CD4-positive, alpha-beta T cell (primary cell): ENCODE measurements at regions of chr17 and their contacts with region 1.

Region 1: GRCh38 chr17:32319548-32319905 is 22.4 kb downstream of the C17orf75 start:
- DNase-seq: peak; percentile 46 to 83 (median 68)
- ATAC-seq: peak; percentile 85
- H3K4me3 ChIP-seq: peak overlapping the region; percentile 40
- H3K4me3 Mint-ChIP-seq: peak overlapping the region; percentile 67
- H3K27ac ChIP-seq: no peak overlapping the region
- H3K27ac Mint-ChIP-seq: no peak overlapping the region
- H3K4me1 ChIP-seq: peaks cover 21% of the 10 kb centered on the region
- H3K4me1 Mint-ChIP-seq: peaks cover 8% of the 10 kb centered on the region
- H3K27me3 ChIP-seq: no peaks in the 10 kb centered on the region
- H3K27me3 Mint-ChIP-seq: peaks cover 14% of the 10 kb centered on the region
- CTCF ChIP-seq: peak; percentile 90

Region 2: GRCh38 chr17:32142857-32143526 is 176.5 kb before region 1 on chr17:
- CTCF ChIA-PET with region 1: no interaction called
- POLR2A ChIA-PET with region 1: no interaction called
- intact Hi-C with region 1: no loop called
- DNase-seq: peak in 4 of 14 experiments; percentile 5 to 42 (median 26)
- ATAC-seq: no peak
- H3K4me3 ChIP-seq: peak overlapping the region; percentile 88
- H3K4me3 Mint-ChIP-seq: peak overlapping the region; percentile 91
- H3K27ac ChIP-seq: no peak overlapping the region
- H3K27ac Mint-ChIP-seq: peak overlapping the region; percentile 86
- H3K4me1 ChIP-seq: peaks cover 42% of the 10 kb centered on the region
- H3K4me1 Mint-ChIP-seq: peaks cover 37% of the 10 kb centered on the region
- H3K27me3 ChIP-seq: no peaks in the 10 kb centered on the region
- H3K27me3 Mint-ChIP-seq: no peaks in the 10 kb centered on the region
- CTCF ChIP-seq: no peak

Region 3: DNA sequence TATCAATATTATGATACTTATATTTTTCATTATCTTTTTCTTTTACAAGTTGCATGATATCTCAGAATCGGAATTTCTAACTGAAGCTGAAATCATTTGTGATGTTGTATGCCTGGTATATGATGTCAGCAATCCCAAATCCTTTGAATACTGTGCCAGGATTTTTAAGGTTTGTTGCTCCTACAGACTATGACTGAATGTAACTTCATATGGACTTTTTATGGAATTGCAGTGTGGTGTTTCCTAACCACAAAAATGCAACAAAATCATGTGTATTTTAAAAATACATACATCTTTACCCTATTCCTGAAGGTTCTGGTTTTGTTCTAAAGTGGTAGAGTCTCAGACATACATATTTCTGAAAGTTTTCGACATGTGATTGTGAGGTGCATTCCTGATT is 112.7 kb before region 1 on chr17:
- CTCF ChIA-PET with region 1: no interaction called
- POLR2A ChIA-PET with region 1: no interaction called
- intact Hi-C with region 1: loop called in 1 of 2 experiments (anchors 1 kb)
- DNase-seq: no peak
- ATAC-seq: no peak
- H3K4me3 ChIP-seq: no peak overlapping the region
- H3K4me3 Mint-ChIP-seq: no peak overlapping the region
- H3K27ac ChIP-seq: no peak overlapping the region
- H3K27ac Mint-ChIP-seq: no peak overlapping the region
- H3K4me1 ChIP-seq: no peaks in the 10 kb centered on the region
- H3K4me1 Mint-ChIP-seq: no peaks in the 10 kb centered on the region
- H3K27me3 ChIP-seq: no peaks in the 10 kb centered on the region
- H3K27me3 Mint-ChIP-seq: no peaks in the 10 kb centered on the region
- CTCF ChIP-seq: no peak

Region 4: GRCh38 chr17:32253117-32253611 is 66.4 kb before region 1 on chr17:
- CTCF ChIA-PET with region 1: interaction called, 4 read pairs
- POLR2A ChIA-PET with region 1: no interaction called
- intact Hi-C with region 1: loop called (anchors 1 kb)
- DNase-seq: peak; percentile 16 to 78 (median 46)
- ATAC-seq: peak; percentile 99
- H3K4me3 ChIP-seq: no peak overlapping the region
- H3K4me3 Mint-ChIP-seq: no peak overlapping the region
- H3K27ac ChIP-seq: no peak overlapping the region
- H3K27ac Mint-ChIP-seq: no peak overlapping the region
- H3K4me1 ChIP-seq: no peaks in the 10 kb centered on the region
- H3K4me1 Mint-ChIP-seq: no peaks in the 10 kb centered on the region
- H3K27me3 ChIP-seq: no peaks in the 10 kb centered on the region
- H3K27me3 Mint-ChIP-seq: peaks cover 14% of the 10 kb centered on the region
- CTCF ChIP-seq: peak; percentile 76